Psoas muscle (tissue), 8 donors: ENCODE measurements at regions of chrX and their contacts with region 1.

Region 1: DNA sequence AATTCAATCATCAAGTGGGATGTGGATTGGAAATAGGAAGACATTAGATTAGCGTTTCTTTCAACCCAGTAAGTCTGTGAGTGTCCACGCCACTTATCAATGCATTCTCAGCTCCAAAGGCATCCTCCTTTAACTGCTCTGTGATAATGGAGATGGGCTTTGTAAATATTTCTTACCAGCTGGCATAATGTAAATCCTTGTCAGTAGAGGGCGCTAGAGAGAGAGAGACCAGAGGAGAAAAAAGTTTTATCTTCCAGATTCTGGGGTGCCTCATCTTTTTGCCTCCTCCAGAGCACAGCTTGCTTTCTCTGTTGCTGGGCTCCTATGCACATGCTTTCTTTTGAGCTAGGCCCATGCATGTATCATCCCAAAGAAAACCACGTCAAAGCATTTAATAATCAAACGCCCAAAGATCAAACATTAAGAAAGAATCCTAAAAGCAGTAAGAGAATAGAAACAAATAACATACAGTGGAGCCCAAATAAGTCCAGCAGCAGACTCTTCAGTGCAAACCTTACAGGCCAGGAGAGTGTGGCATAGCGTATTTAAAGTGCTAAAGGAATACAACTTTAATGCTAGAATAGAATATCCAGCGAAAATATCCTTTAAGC is 9.6 kb upstream of the MTMR1 start:
- DNase-seq: no peak
- ATAC-seq: peak in 1 of 4 donors; percentile 33
- H3K4me3 ChIP-seq: no peak overlapping the region
- H3K27ac ChIP-seq: no peak overlapping the region
- H3K4me1 ChIP-seq: no peaks in the 10 kb centered on the region
- H3K27me3 ChIP-seq: no peaks in the 10 kb centered on the region
- CTCF ChIP-seq: peak; percentile 54

Region 2: GRCh38 chrX:150715184-150715583 is 31.5 kb after region 1 on chrX:
- intact Hi-C with region 1: loop called in 1 of 2 experiments (anchors 5 kb)
- DNase-seq: no peak
- ATAC-seq: no peak
- H3K4me3 ChIP-seq: no peak overlapping the region
- H3K27ac ChIP-seq: no peak overlapping the region
- H3K4me1 ChIP-seq: no peaks in the 10 kb centered on the region
- H3K27me3 ChIP-seq: no peaks in the 10 kb centered on the region
- CTCF ChIP-seq: no peak